ENCODE measurements at regions of chr9 and their contacts with region 1.

Region 1: GRCh38 chr9:2000314-2000713 is 14.8 kb upstream of the SMARCA2 start:
- DNase-seq: no peak
- H3K4me3 ChIP-seq: no peak overlapping the region
- H3K27ac ChIP-seq: no peak overlapping the region
- H3K4me1 ChIP-seq: no peaks in the 10 kb centered on the region
- H3K27me3 ChIP-seq: no peaks in the 10 kb centered on the region
- CTCF ChIP-seq: no peak
- POLR2A ChIP-seq: no peak

Region 2: DNA sequence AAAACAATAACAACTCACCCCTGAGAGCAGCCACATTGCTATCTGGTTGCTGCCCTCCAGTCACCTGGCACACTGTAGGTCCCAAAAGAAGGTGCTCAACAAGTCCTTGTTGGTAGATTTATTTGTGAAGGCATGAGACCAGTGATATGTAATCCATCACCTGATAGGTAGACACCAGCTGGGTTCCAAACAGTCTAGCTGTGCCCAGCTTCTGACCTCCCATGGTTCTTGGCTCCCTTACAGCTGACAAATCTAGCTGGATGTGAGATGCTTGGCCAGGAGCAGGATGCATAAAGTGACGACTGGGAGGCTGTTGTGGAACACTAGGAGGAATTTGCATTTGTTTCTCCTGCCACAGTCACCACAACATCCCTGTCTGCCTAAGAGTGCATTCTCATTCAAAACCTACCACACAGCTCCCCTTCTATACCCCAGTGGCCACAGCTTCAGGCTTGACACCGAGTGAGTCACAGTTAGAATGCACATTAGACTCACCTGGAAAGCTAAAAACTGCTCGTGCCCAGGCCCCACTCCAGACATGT is 613.5 kb after region 1 on chr9:
- intact Hi-C with region 1: loop called (anchors 10 kb)
- DNase-seq: no peak
- H3K4me3 ChIP-seq: no peak overlapping the region
- H3K27ac ChIP-seq: no peak overlapping the region
- H3K4me1 ChIP-seq: no peaks in the 10 kb centered on the region
- H3K27me3 ChIP-seq: no peaks in the 10 kb centered on the region
- CTCF ChIP-seq: no peak
- POLR2A ChIP-seq: no peak

Measured in vagina (tissue), 2 donors.